HEK293T (cell line): ENCODE measurements at regions of chr11 and their contacts with region 1.

Region 1: GRCh38 chr11:118051611-118052461 is 25.0 kb upstream of the TMPRSS4 start:
- DNase-seq: no peak

Region 2: DNA sequence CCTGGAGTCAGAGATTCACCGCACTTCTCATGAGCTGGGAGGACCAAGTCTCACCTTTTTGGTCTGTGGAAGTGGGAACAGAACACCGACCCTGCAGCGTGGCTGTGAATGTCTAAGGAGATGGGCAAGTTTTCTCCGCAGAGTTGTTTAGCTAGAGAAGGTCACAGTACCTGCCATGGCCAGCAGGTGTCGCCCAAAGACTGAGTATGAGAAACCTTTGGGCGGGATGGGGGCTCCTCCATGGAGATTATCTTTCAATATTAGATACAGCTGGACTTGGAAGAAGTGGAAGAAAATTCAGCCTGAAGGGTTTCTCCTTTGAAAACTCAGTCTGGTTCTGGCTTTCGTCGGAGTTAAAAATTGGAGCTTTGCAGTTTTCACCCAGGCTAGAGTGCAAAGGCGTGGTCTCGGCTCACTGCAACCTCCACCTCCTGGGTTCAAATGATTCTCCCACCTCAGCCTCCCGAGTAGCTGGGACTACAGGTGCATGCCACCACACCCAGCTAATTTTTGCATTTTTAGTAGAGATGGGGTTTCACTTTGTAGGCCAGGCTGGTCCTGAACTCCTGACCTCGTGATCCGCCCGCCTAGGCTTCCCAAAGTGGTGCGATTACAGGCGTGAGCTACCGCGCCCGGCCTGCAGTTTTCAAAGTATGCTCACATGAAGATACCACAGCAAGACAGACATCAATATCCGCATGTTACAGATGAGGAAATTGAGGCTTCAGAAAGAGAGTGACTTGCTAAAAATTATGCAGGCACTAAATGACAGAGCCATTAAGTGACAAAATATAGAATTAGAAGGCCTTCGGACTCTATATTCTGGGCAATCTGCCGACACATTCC is 244.1 kb before region 1 on chr11:
- CTCF ChIA-PET with region 1: interaction called, 16 read pairs
- POLR2A ChIA-PET with region 1: no interaction called
- DNase-seq: peak; percentile 76

Region 3: GRCh38 chr11:117817368-117818040 is 234.3 kb before region 1 on chr11:
- CTCF ChIA-PET with region 1: interaction called, 11 read pairs
- POLR2A ChIA-PET with region 1: no interaction called
- DNase-seq: peak; percentile 80